CD4-positive, alpha-beta memory T cell (primary cell): ENCODE measurements at regions of chr7 and their contacts with region 1.

Region 1: GRCh38 chr7:21352540-21353387 is 75.1 kb upstream of the SP4 start:
- DNase-seq: peak in 4 of 5 donors; percentile 46 to 61 (median 50)
- H3K4me3 ChIP-seq: peak overlapping the region in 1 of 2 donors; percentile 26
- H3K4me3 Mint-ChIP-seq: peak overlapping the region; percentile 47 to 91 (median 76)
- H3K27ac ChIP-seq: peak overlapping the region; percentile 34
- H3K27ac Mint-ChIP-seq: peak overlapping the region; percentile 62 to 97 (median 93)
- H3K4me1 ChIP-seq: peaks cover 60% of the 10 kb centered on the region
- H3K4me1 Mint-ChIP-seq: peaks cover 49 to 59% (median 55%) of the 10 kb centered on the region in 4 donors
- H3K27me3 ChIP-seq: no peaks in the 10 kb centered on the region
- H3K27me3 Mint-ChIP-seq: no peaks in the 10 kb centered on the region

Region 2: GRCh38 chr7:21044384-21044783 is 308.4 kb before region 1 on chr7:
- CTCF ChIA-PET with region 1: no interaction called
- POLR2A ChIA-PET with region 1: no interaction called
- intact Hi-C with region 1: no loop called
- DNase-seq: no peak
- H3K4me3 ChIP-seq: no peak overlapping the region
- H3K4me3 Mint-ChIP-seq: no peak overlapping the region
- H3K27ac ChIP-seq: no peak overlapping the region
- H3K27ac Mint-ChIP-seq: no peak overlapping the region
- H3K4me1 ChIP-seq: no peaks in the 10 kb centered on the region
- H3K4me1 Mint-ChIP-seq: no peaks in the 10 kb centered on the region
- H3K27me3 ChIP-seq: no peaks in the 10 kb centered on the region
- H3K27me3 Mint-ChIP-seq: peaks cover 1 to 2% of the 10 kb centered on the region in 2 donors

Region 3: DNA sequence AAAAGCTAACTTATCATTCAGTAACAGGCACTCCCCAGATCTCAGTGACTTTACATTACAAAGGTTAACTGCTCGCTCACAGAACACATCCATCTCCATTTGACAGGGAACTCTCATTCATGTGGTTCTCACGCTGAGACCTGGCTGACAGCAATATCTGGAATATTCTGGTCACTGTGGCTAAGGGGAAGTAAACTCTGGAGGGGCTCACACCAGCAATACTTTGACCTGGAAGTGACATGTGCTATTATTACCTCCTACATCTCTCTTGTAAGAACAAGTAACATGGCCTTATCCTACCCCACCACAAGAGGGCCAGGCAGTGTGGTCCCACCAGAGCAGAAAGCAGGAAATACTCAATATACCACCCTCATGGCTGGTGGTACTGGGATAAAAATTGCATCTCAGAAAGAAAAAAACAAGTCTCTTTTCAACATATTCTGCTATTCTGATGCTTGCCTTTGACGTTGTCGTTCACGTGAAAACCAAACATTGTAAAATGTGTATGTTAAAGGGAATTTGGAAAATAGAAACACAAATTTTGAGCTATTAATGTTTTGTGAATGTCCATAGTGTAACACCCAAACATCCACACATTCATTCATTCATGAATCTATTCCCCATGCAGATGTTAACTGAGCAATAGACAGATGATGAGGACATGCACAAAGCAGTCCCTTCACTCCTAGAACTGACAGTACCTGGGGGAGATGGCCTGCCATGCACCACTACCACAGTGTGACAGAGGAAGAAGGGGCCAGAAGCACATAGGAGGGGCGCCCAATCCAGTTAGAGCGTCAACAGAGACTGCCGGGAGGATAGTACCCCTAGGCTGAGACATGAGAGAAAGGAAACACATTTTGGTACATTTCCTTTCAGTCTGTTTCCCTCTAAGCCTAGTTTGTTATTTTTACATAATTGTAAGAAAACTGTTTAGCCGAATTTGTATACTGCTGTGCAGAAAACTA is 90.9 kb before region 1 on chr7:
- CTCF ChIA-PET with region 1: interaction called, 3 read pairs
- POLR2A ChIA-PET with region 1: no interaction called
- intact Hi-C with region 1: loop called (anchors 5 kb)
- DNase-seq: peak; percentile 23 to 54 (median 37)
- H3K4me3 ChIP-seq: no peak overlapping the region
- H3K4me3 Mint-ChIP-seq: no peak overlapping the region
- H3K27ac ChIP-seq: no peak overlapping the region
- H3K27ac Mint-ChIP-seq: peak overlapping the region in 1 of 7 donors; percentile 23
- H3K4me1 ChIP-seq: peaks cover 6% of the 10 kb centered on the region
- H3K4me1 Mint-ChIP-seq: peaks cover 6 to 9% (median 8%) of the 10 kb centered on the region in 4 donors
- H3K27me3 ChIP-seq: no peaks in the 10 kb centered on the region
- H3K27me3 Mint-ChIP-seq: peaks cover 3 to 5% of the 10 kb centered on the region in 2 donors

Region 4: DNA sequence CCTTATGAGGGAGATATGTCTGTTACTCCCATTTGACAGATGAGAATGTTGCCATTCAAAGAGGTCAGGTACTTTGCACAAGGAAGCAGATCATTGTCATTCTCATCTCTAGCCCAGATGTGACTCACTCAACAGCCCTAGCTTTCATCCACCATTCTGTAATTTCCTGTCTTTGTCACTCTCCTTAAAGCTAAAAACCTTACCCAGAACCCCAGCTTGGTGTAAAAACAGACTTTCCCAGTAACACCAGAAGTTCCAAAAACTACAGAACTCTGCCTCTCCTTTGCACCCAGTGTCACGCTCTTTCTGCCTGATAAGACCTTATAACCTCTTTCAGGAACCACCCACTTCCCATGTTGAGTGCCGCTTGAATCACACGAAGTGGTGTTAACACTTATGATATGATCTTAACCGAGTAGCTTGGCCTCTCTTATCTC is 14.0 kb before region 1 on chr7:
- CTCF ChIA-PET with region 1: interaction called, 9 read pairs
- POLR2A ChIA-PET with region 1: interaction called, 16 read pairs
- intact Hi-C with region 1: loop called (anchors 1 kb)
- DNase-seq: peak; percentile 24 to 69 (median 47)
- H3K4me3 ChIP-seq: peak overlapping the region in 1 of 2 donors; percentile 30
- H3K4me3 Mint-ChIP-seq: peak overlapping the region; percentile 8 to 79 (median 66)
- H3K27ac ChIP-seq: peak overlapping the region; percentile 34
- H3K27ac Mint-ChIP-seq: peak overlapping the region; percentile 67 to 93 (median 91)
- H3K4me1 ChIP-seq: peaks cover 19% of the 10 kb centered on the region
- H3K4me1 Mint-ChIP-seq: peaks cover 20 to 51% (median 25%) of the 10 kb centered on the region in 4 donors
- H3K27me3 ChIP-seq: no peaks in the 10 kb centered on the region
- H3K27me3 Mint-ChIP-seq: no peaks in the 10 kb centered on the region

Region 5: DNA sequence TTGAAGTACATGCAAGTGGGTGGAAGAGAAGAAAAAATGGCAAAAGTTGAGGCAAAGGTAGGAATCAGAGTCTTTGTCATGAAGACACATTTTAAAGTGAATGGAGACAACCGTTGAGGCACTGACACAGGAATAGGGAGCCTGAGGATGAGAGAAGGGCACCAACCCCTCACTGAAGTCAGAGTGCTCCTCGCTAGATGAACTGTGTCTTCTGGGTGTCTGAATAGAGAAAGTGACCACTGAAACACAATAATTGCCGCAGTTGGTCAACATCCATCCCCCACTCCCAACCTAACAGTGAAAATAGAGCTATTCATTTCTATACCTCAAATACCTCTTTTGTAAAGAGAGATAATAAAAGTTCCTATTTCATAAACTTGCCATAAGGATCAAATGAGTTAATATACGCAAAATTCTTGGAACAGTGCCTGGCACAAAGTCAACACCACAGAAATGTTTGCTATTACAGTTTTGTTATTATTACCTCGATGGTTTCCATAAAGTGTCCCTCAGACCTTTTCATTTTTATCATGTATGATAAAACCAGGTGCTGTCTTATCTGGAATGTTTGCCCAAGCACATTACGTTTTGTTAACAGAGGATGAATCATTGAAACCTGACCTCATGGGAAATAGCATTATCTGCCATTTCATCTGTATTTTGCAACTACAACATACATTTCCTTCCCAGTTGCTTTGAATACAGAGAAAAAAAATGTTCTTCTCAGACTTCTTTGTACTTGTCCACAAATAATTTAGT is 13.3 kb after region 1 on chr7:
- CTCF ChIA-PET with region 1: interaction called, 3 read pairs
- POLR2A ChIA-PET with region 1: interaction called, 5 read pairs
- intact Hi-C with region 1: loop called (anchors 1 kb)
- DNase-seq: no peak
- H3K4me3 ChIP-seq: no peak overlapping the region
- H3K4me3 Mint-ChIP-seq: peak overlapping the region in 4 of 8 donors; percentile 13 to 70 (median 48)
- H3K27ac ChIP-seq: no peak overlapping the region
- H3K27ac Mint-ChIP-seq: peak overlapping the region in 2 of 7 donors; percentile 45 to 79
- H3K4me1 ChIP-seq: peaks cover 23% of the 10 kb centered on the region
- H3K4me1 Mint-ChIP-seq: peaks cover 26 to 34% (median 30%) of the 10 kb centered on the region in 4 donors
- H3K27me3 ChIP-seq: no peaks in the 10 kb centered on the region
- H3K27me3 Mint-ChIP-seq: peaks cover 0 to 1% of the 10 kb centered on the region in 2 donors

Region 6: DNA sequence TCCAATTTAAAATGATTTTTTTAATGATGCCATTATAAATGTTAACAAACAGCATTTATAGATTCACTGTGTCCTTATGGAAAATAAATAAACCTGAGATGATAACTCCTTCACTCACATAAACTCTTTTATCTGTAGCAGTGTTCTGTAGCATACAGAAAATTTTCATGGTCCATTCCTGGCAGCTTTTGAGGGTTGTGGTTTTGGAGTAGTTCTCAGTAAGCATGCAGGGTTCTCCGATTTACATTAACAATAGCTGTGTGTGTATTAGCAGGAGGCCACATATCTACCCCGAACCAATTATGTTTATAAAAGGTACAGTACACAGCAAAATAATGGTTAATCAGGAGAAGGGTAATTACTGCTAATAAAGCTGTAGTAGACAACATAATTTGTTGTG is 430.2 kb after region 1 on chr7:
- CTCF ChIA-PET with region 1: no interaction called
- POLR2A ChIA-PET with region 1: no interaction called
- intact Hi-C with region 1: no loop called
- DNase-seq: no peak
- H3K4me3 ChIP-seq: no peak overlapping the region
- H3K4me3 Mint-ChIP-seq: no peak overlapping the region
- H3K27ac ChIP-seq: no peak overlapping the region
- H3K27ac Mint-ChIP-seq: no peak overlapping the region
- H3K4me1 ChIP-seq: no peaks in the 10 kb centered on the region
- H3K4me1 Mint-ChIP-seq: no peaks in the 10 kb centered on the region
- H3K27me3 ChIP-seq: no peaks in the 10 kb centered on the region
- H3K27me3 Mint-ChIP-seq: peaks cover 0 to 3% of the 10 kb centered on the region in 2 donors